ENCODE measurements at regions of chr11 and their contacts with region 1.

Region 1: GRCh38 chr11:117217141-117218084 is 14.5 kb downstream of the PCSK7 start:
- DNase-seq: peak; percentile 65
- H3K4me3 ChIP-seq: no peak overlapping the region
- H3K27ac ChIP-seq: peak overlapping the region; percentile 97
- H3K27me3 ChIP-seq: no peaks in the 10 kb centered on the region
- CTCF ChIP-seq: no peak

Region 2: GRCh38 chr11:117199061-117199915 is 18.1 kb before region 1 on chr11 and contains the start of gene TAGLN:
- CTCF ChIA-PET with region 1: interaction called, 5 read pairs
- POLR2A ChIA-PET with region 1: interaction called, 15 read pairs
- DNase-seq: peak; percentile 91
- H3K4me3 ChIP-seq: peak within 1 kb of the TSS; percentile 88
- H3K27ac ChIP-seq: peak within 1 kb of the TSS; percentile 96
- H3K27me3 ChIP-seq: no peaks in the 10 kb centered on the region
- CTCF ChIP-seq: no peak
- polyA plus RNA-seq, gene TAGLN: 3,100 and 3,444 TPM in 2 replicates